Tibial artery (tissue), 4 donors: ENCODE measurements at regions of chr1 and their contacts with region 1.

Region 1: DNA sequence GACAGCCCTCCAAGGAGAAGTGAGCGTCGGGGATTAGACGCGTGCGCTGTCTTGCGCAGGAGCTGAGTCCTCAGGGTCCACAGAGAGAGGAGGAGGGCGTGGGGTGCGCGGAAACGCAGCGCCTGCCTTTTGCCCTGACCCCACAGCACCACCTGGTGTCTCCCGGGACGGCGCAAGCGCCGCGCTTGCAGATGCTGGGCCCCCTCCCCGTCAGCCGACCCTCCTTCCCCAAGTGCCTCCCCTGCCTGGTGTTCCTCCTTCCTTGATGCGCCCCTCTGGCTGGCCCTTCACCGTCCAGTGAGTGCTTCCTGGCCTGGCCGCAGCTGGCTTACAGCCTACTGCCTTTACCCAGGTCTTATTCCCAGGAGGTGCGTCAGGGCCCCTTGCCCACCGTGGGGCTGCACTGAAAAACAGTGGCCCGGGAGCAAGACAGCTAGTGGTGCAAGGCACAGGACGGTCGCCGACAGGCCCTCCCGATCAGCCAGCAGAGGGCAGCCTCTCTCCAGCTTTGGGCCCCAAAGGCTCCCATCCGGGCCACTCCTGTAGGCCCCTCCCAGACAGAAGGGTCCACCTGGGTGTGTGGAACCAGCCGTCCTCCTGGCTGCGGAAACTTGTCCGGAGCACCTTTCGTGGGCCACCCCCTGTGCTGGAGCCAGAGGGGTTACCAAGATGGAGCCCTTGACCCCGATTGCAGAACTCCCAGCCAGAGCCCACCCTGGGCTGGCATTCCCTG is 12.9 kb upstream of the PHLDA3 start:
- DNase-seq: peak; percentile 78 to 94
- H3K4me3 ChIP-seq: peak overlapping the region; percentile 39 to 47
- H3K27ac ChIP-seq: peak overlapping the region; percentile 93 to 97
- H3K4me1 ChIP-seq: peaks cover 0 to 53% (median 39%) of the 10 kb centered on the region in 4 donors
- H3K27me3 ChIP-seq: no peaks in the 10 kb centered on the region
- CTCF ChIP-seq: peak; percentile 89 to 98

Region 2: GRCh38 chr1:201511941-201512539 is 30.1 kb after region 1 on chr1:
- intact Hi-C with region 1: loop called (anchors 1 kb)
- DNase-seq: peak; percentile 61 to 84
- H3K4me3 ChIP-seq: no peak overlapping the region
- H3K27ac ChIP-seq: peak overlapping the region; percentile 57 to 65
- H3K4me1 ChIP-seq: peaks cover 0 to 42% (median 29%) of the 10 kb centered on the region in 4 donors
- H3K27me3 ChIP-seq: no peaks in the 10 kb centered on the region
- CTCF ChIP-seq: no peak